PC-9 (cell line): ENCODE measurements at regions of chr7 and their contacts with region 1.

Region 1: GRCh38 chr7:41107668-41108448 is 595.0 kb downstream of the INHBA start:
- DNase-seq: peak; percentile 92 to 100
- H3K4me3 ChIP-seq: peak overlapping the region; percentile 45; the same call in 1 of the 2 replicates
- H3K27ac ChIP-seq: peak overlapping the region; percentile 93
- H3K4me1 ChIP-seq: peaks cover 64% of the 10 kb centered on the region
- H3K27me3 ChIP-seq: no peaks in the 10 kb centered on the region
- CTCF ChIP-seq: no peak

Region 2: GRCh38 chr7:40899651-40900507 is 208.0 kb before region 1 on chr7:
- CTCF ChIA-PET with region 1: no interaction called
- POLR2A ChIA-PET with region 1: no interaction called
- intact Hi-C with region 1: loop called (anchors 5 kb)
- DNase-seq: peak; percentile 48 to 89
- H3K4me3 ChIP-seq: peak overlapping the region; percentile 51
- H3K27ac ChIP-seq: peak overlapping the region; percentile 94
- H3K4me1 ChIP-seq: peaks cover 25% of the 10 kb centered on the region
- H3K27me3 ChIP-seq: no peaks in the 10 kb centered on the region
- CTCF ChIP-seq: no peak

Region 3: DNA sequence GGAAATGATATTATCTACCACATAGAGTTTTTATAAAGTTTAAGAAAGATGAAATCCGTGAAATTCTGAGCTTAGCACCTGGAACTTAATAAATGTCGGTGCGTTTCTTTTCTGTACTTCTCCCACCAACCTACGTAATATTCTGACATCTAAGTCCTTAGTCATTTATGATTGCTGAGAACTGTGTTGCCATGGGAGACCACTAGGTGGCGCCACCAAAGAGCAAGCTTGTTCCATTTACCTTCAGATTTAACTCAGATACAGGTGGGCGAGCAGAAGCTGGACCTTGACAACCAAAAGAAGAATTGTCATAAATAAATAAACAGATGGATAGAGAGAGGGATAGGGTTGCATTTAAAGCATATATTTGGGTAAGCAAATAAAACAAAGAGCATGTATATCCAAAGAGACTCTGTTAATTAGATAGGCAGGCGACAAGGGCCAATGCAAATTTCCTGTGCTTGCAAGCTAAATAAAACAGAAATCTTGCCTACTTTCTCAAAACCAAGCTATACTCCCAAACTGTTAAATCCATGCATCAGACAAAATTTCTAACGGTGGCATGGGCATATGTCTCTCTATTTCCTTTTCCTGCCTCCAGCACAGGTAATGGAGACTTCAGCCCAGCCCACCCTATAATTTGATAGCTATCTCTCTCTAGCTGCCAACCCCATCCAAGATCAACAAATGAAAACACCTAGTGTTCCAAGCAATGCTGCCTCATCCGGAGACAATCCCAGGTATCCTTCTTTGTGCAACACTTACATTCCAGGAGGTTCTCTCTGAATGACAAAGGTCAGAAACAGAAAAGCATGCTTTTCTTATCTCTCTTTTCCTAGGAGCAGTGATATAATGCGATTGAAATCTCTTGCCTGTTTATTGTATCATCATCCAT is 104.6 kb before region 1 on chr7:
- CTCF ChIA-PET with region 1: no interaction called
- POLR2A ChIA-PET with region 1: no interaction called
- intact Hi-C with region 1: loop called (anchors 1 kb)
- DNase-seq: peak; percentile 59 to 90
- H3K4me3 ChIP-seq: no peak overlapping the region
- H3K27ac ChIP-seq: peak overlapping the region; percentile 10
- H3K4me1 ChIP-seq: peaks cover 54% of the 10 kb centered on the region
- H3K27me3 ChIP-seq: no peaks in the 10 kb centered on the region
- CTCF ChIP-seq: peak; percentile 95

Region 4: GRCh38 chr7:41029072-41029499 is 78.8 kb before region 1 on chr7:
- CTCF ChIA-PET with region 1: no interaction called
- POLR2A ChIA-PET with region 1: no interaction called
- intact Hi-C with region 1: loop called (anchors 1 kb)
- DNase-seq: peak; percentile 74 to 84
- H3K4me3 ChIP-seq: no peak overlapping the region
- H3K27ac ChIP-seq: peak overlapping the region; percentile 39
- H3K4me1 ChIP-seq: peaks cover 22% of the 10 kb centered on the region
- H3K27me3 ChIP-seq: no peaks in the 10 kb centered on the region
- CTCF ChIP-seq: no peak

Region 5: GRCh38 chr7:41148521-41148951 is 40.7 kb after region 1 on chr7:
- CTCF ChIA-PET with region 1: no interaction called
- POLR2A ChIA-PET with region 1: no interaction called
- intact Hi-C with region 1: loop called (anchors 1 kb)
- DNase-seq: peak; percentile 34 to 100
- H3K4me3 ChIP-seq: no peak overlapping the region; the same call in 1 of the 2 replicates
- H3K27ac ChIP-seq: peak overlapping the region; percentile 66
- H3K4me1 ChIP-seq: peaks cover 26% of the 10 kb centered on the region
- H3K27me3 ChIP-seq: no peaks in the 10 kb centered on the region
- CTCF ChIP-seq: no peak

Region 6: GRCh38 chr7:41189866-41190265 is 82.0 kb after region 1 on chr7:
- CTCF ChIA-PET with region 1: no interaction called
- POLR2A ChIA-PET with region 1: interaction called, 7 read pairs
- intact Hi-C with region 1: loop called (anchors 5 kb)
- DNase-seq: peak; percentile 61 to 99
- H3K4me3 ChIP-seq: no peak overlapping the region
- H3K27ac ChIP-seq: peak overlapping the region; percentile 93
- H3K4me1 ChIP-seq: peaks cover 46% of the 10 kb centered on the region
- H3K27me3 ChIP-seq: no peaks in the 10 kb centered on the region
- CTCF ChIP-seq: no peak